ENCODE measurements at regions of chr10 and their contacts with region 1.

Region 1: GRCh38 chr10:101297901-101298486 is 56.0 kb upstream of the BTRC start:
- DNase-seq: no peak
- ATAC-seq: no peak

Region 2: DNA sequence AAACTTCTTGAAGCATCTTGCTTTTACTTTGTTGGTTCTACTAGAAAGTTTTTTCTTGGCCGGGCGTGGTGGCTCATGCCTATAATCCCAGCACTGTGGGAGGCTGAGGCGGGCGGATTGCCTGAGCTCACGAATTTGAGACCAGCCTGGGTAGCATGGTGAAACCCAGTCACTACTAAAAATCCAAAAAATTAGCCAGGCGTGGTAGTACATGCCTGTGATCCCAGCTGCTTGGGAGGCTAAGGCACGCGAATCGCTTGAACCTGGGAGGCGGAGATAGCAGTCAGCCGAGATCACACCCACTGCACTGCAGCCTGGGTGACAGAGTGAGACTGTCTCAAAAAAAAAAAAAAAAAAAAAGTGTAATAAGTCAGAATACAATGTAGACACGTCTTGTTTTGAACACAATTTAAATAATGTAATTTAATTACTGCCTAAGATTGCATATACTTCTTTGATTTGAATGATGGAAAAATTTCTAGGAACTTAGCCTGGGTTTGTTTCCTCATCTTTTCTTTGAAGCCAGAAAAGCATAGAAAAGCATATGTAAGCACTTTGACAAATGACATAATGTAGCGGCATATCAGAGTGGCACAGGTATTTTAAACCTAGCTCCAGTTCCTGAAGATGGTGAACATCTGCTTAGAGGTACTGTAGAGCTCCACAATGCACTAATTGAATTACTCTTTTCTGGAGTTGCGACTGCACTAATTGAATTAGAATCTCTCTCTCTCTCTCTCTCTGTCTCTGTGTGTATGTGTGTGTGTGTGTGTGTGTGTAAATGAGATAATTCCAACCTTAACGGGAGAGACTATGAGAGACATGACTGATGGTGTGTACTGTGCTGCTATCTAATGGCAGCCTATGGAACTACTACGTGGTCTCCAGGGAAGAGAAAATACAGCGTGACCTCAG is 143.8 kb after region 1 on chr10:
- intact Hi-C with region 1: loop called (anchors 2 kb)
- DNase-seq: peak; percentile 43
- ATAC-seq: peak; percentile 84

Measured in Right ventricle myocardium inferior (tissue), 1 donor.